Activated CD8-positive, alpha-beta T cell treated with anti-CD3 and anti-CD28 coated beads for 36 hours (primary cell): ENCODE measurements at regions of chr6 and their contacts with region 1.

Region 1: GRCh38 chr6:36094753-36095496 is 35.4 kb upstream of the MAPK13 start:
- DNase-seq: peak; percentile 90
- ATAC-seq: peak; percentile 82
- H3K4me3 Mint-ChIP-seq: no peak overlapping the region
- H3K27ac Mint-ChIP-seq: peak overlapping the region; percentile 67
- H3K4me1 Mint-ChIP-seq: peaks cover 32% of the 10 kb centered on the region
- H3K27me3 Mint-ChIP-seq: no peaks in the 10 kb centered on the region
- CTCF ChIP-seq: peak; percentile 96

Region 2: DNA sequence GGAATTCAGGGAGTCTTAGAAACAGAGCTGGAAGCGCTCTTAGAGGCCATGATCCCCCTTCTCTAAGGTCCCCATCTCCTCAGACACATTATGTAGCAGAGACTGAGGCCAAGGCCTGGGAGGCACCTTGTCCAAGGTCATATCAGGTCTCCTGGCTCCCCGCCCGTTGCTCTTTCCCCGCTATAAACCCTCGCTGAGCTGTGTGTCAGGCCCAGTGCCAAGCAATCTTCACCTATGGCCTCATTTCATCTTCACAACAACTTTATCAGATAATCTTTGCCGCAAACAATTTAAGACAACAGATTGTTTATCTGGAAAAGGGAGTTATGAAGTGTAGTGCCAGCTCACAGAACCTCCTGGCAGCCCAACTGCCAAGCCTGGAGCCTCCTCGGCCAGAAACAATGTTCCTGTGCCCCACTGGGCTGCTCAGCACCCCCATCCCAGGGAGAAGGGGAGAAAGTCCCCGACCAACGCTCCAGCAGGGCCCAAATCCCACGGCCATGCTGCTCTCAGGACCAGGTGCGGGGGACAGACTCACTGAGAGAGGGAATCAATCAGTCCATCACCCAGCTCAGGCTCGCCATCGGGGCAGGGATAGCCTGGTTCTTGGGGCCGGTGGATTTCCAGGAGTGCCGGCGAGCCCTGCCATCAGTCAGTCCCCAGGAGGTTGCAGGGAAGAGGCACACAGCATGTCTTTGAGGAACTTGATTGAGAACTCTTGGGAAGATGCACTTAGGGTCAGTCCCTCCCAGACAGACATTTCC is 659.7 kb before region 1 on chr6:
- CTCF ChIA-PET with region 1: no interaction called
- POLR2A ChIA-PET with region 1: no interaction called
- intact Hi-C with region 1: no loop called
- DNase-seq: no peak
- ATAC-seq: no peak
- H3K4me3 Mint-ChIP-seq: no peak overlapping the region
- H3K27ac Mint-ChIP-seq: no peak overlapping the region
- H3K4me1 Mint-ChIP-seq: no peaks in the 10 kb centered on the region
- H3K27me3 Mint-ChIP-seq: no peaks in the 10 kb centered on the region
- CTCF ChIP-seq: no peak

Region 3: DNA sequence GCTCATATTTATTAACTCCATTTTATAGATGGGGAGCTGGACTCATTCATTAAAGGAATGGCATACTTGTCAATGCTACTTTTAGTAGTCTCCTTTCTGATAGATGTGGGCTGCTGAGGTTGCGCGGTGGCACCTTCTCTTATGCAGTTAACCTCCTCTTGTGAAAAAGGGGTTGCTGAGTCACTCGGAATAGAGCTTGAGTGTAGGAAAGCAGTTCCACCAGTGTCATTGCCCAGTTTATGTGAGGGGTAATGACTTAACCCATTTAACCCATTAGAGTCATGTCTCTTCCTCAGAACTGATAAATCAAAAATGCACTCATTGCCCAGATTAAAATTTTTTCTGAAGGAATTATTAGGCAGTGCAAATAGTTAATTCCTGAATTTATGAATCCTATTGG is 61.0 kb before region 1 on chr6:
- CTCF ChIA-PET with region 1: interaction called, 230 read pairs
- POLR2A ChIA-PET with region 1: interaction called, 57 read pairs
- intact Hi-C with region 1: no loop called
- DNase-seq: peak; percentile 84
- ATAC-seq: peak; percentile 91
- H3K4me3 Mint-ChIP-seq: no peak overlapping the region
- H3K27ac Mint-ChIP-seq: no peak overlapping the region
- H3K4me1 Mint-ChIP-seq: peaks cover 65% of the 10 kb centered on the region
- H3K27me3 Mint-ChIP-seq: no peaks in the 10 kb centered on the region
- CTCF ChIP-seq: no peak

Region 4: GRCh38 chr6:36067374-36068011 is 27.4 kb before region 1 on chr6:
- CTCF ChIA-PET with region 1: interaction called, 31 read pairs
- POLR2A ChIA-PET with region 1: no interaction called
- intact Hi-C with region 1: no loop called
- DNase-seq: no peak
- ATAC-seq: peak; percentile 30
- H3K4me3 Mint-ChIP-seq: no peak overlapping the region
- H3K27ac Mint-ChIP-seq: no peak overlapping the region
- H3K4me1 Mint-ChIP-seq: peaks cover 57% of the 10 kb centered on the region
- H3K27me3 Mint-ChIP-seq: no peaks in the 10 kb centered on the region
- CTCF ChIP-seq: no peak

Region 5: DNA sequence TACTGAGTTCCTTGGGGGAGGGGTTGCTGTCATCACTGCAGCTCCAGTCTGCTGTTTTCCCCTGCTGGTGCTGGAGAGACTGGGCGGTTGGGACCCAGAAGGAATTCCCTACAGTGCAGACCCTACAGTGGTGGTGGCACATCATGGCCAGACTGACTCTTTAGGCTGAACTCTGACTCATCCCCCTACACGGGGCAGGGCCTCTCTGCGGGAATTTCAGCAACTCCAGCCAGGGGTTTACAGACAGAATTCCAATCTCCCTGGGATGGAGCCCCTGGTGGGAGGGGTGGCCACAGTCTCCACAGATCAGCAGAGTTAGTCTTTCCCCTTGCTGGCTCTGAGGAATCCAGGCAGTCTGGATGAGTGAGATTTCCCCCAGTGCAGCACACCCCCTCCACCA is 11.5 kb before region 1 on chr6:
- CTCF ChIA-PET with region 1: interaction called, 58 read pairs
- POLR2A ChIA-PET with region 1: no interaction called
- intact Hi-C with region 1: no loop called
- DNase-seq: no peak
- ATAC-seq: no peak
- H3K4me3 Mint-ChIP-seq: no peak overlapping the region
- H3K27ac Mint-ChIP-seq: no peak overlapping the region
- H3K4me1 Mint-ChIP-seq: peaks cover 12% of the 10 kb centered on the region
- H3K27me3 Mint-ChIP-seq: no peaks in the 10 kb centered on the region
- CTCF ChIP-seq: no peak

Region 6: DNA sequence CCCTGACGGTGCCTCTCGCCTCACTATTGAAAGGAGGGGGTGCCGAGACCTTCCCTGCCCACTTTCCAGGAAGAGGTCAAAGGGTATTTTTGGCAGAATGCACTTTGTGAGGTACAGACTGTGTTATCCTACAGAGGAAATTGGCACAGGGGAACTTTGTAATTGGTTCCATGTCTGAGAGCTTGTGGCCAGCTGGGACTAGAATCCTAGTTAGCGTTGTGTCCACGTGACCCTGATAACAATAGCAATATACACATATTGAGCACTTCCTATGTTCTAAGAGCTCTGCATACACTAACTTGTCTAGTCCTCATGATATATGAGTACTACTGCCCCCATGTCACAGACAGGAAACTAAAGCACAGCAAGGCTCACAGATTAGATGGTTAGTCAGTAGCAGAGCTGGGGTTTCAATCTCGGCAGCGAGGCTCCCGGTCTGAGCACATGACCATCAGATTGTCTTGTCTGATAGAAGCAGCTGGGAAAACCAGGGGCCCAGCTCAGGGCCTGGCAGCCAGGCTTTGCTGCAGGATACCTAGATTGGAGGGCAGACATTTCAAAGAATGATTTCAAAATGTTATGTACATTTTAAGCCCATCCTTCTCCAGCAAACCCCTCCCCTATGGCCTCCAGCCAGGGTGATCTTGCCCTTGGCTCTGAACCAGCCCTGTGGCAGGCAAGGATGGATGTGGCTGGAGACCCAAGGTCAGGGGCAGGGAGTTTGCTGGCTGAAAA is 36.8 kb after region 1 on chr6:
- CTCF ChIA-PET with region 1: interaction called, 26 read pairs
- POLR2A ChIA-PET with region 1: interaction called, 5 read pairs
- intact Hi-C with region 1: no loop called
- DNase-seq: peak; percentile 78
- ATAC-seq: peak; percentile 79
- H3K4me3 Mint-ChIP-seq: peak overlapping the region; percentile 88
- H3K27ac Mint-ChIP-seq: peak overlapping the region; percentile 96
- H3K4me1 Mint-ChIP-seq: peaks cover 50% of the 10 kb centered on the region
- H3K27me3 Mint-ChIP-seq: no peaks in the 10 kb centered on the region
- CTCF ChIP-seq: no peak